Left cardiac atrium (tissue), 4 donors: ENCODE measurements at regions of chr5 and their contacts with region 1.

Region 1: DNA sequence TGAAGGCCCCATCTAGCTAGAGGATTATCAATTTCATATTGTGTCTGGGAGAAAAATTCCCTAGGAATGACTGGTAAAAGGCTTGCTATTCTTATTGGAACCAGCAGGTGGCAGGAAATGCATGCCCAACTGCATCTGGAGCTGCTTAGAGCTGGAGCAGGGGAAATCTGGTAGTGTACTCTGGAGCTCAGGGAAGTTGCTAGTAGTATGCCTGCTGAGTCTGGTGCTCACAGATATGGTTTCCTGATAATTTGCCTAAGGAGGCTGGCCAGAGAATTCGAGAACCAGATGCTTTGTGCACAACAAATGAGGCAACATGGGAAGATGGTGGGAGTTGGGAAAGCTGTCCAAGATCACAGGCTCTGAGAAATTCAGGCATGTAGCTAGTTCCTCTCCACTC is 53.7 kb downstream of the G3BP1 start:
- DNase-seq: peak; percentile 41
- ATAC-seq: peak; percentile 87 to 91

Region 2: GRCh38 chr5:151596828-151597539 is 228.5 kb before region 1 on chr5:
- intact Hi-C with region 1: no loop called
- DNase-seq: no peak
- ATAC-seq: peak; percentile 75 to 80

Region 3: GRCh38 chr5:152142840-152143469 is 317.5 kb after region 1 on chr5:
- intact Hi-C with region 1: loop called (anchors 2 to 5 kb)
- DNase-seq: peak; percentile 59
- ATAC-seq: peak; percentile 78 to 80

Region 4: DNA sequence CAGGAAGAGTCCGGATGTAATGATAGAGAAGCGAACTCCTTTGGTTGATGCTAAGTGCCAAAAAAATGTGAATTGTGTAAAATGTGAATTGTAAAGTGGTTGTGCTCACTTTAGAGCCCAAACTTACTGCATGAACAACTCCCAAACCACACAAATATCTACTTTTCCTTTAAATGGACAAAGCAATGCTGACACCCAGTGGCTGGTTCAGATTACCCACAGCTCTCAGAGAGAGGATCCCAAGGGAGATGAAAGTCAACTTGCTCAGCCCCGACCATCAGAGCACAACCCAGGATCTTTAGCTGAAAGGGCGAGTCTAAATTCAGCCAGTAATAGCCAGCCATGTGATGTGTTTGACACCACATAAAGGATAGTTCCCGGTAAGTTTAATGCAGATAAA is 446.0 kb after region 1 on chr5:
- intact Hi-C with region 1: loop called in 1 of 2 experiments (anchors 5 kb)
- DNase-seq: no peak
- ATAC-seq: peak; percentile 63 to 76

Region 5: DNA sequence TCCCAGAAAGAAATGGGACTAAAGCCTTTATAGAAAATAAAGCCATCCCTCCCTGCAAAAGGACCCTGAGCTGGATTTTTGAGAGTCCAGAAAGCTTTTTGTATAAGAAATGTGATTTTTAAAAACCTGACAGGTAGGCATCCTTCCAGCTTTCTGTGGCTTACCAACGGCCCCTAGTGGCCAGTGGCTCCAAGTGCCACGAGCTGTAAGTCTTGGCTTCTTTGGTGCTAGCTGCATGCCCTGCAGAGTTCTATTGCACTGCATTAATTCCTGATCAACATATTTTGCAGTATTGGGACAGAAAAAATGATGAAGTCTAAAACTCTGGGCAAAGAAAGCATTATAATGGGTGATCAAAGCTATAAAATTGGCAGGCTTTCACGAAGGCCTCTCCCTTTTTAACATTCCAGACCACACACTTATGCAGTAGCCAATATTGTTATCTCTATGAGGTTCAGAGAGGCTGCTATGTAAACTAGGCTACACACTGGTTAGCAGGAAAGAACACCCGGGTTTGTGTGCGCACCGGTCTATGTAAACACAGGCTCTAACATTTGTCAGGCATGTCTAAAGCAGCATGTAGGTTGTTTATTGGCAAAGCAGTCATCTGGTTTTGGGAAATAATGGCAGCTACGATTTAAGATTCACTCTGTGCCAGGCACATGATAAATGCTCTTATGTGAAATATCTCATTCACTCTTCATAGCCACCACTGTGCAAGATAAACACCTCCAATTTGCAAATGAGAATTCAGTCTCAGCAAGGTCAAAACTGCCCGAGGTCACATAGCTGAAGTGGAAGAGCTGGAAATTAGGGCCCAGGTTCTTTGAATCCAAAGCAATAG is 524.5 kb after region 1 on chr5:
- intact Hi-C with region 1: loop called in 1 of 2 experiments (anchors 5 kb)
- DNase-seq: peak; percentile 30
- ATAC-seq: peak; percentile 71 to 76

Region 6: DNA sequence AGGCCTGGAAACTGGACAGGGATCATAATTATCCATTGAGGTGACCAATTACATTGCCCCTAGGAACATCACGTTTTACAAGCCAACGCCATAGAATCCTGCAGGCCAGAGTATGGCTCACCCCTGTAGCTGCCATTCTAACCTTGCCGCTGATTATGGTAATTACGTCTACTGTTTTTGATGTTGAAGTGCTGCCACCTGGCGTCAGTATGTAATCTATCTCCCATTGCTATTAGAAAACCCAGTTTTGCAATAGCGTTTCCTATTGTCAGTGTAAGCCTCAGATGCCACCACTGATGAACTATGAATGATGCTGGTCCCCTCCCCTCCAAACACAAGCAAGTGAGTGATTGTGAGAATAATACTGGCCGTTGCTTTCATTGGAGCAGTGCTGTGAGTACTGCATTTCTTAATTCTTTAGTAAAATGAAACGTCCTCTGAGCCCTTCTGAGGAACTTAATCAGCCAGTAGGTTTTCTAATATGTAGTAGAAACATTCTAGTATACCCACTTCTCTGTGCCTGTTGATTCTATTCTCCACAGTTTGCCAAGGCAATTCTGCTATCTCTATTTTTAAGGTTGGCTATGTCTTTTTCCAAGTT is 680.1 kb after region 1 on chr5:
- intact Hi-C with region 1: loop called (anchors 5 to 10 kb)
- DNase-seq: peak; percentile 51
- ATAC-seq: peak; percentile 70 to 73